RWPE1 (cell line): ENCODE measurements at regions of chr17 and their contacts with region 1.

Region 1: GRCh38 chr17:19992803-19993713 is 15.4 kb upstream of the AKAP10 start:
- DNase-seq: peak; percentile 65
- H3K27ac ChIP-seq: no peak overlapping the region
- CTCF ChIP-seq: peak; percentile 72

Region 2: DNA sequence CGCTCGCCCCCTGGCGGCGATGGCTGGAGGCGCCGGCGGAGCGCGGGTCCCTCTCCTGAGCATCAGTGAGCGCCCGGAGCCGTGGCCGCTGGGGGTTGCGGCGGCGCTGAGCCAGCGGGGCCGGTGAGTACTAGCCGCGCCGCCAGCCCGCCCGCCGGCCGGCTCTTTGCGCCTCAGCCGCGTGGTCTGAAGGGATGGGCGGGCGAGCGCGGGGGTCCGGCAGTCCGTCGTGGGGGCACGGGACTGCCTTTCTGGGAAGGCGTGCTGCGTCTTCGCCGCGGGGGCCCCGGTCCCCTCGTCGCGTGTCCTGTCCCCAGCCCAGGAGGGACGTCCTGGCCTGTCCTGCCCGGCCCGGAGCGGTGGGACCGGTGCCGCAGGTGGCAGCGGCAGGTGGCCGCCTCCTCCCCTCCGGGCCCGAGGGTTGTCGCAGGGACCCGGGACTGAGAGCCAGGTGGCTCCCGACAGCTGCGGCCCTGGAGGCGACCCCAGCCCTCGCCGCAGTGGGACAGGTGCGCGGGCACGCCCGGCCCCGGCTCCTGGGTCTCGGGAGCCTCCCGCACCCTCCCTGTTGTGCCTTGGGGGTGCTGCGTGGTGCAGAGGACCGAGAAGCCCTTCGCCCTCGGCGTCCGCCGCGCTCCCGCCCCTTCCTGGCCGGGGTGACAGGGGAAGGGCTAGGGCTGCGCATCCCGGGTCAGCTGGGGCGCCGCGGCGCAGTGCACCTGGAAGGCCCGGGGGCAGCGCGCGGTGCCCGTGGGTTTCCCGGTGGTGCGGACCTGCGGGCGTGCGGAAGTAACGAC is 16.4 kb after region 1 on chr17 and contains the start of gene SPECC1:
- CTCF ChIA-PET with region 1: interaction called, 19 read pairs
- POLR2A ChIA-PET with region 1: no interaction called
- DNase-seq: peak; percentile 75
- H3K27ac ChIP-seq: no peak within 1 kb of the TSS
- CTCF ChIP-seq: peak; percentile 96

Region 3: GRCh38 chr17:20116683-20117309 is 123.7 kb after region 1 on chr17:
- CTCF ChIA-PET with region 1: interaction called, 13 read pairs
- POLR2A ChIA-PET with region 1: no interaction called
- DNase-seq: peak; percentile 30
- H3K27ac ChIP-seq: no peak overlapping the region
- CTCF ChIP-seq: peak; percentile 77